Lower leg skin (tissue), 4 donors: ENCODE measurements at regions of chr5 and their contacts with region 1.

Region 1: GRCh38 chr5:77426670-77427069 is 65.4 kb downstream of the WDR41 start:
- DNase-seq: no peak
- H3K4me3 ChIP-seq: no peak overlapping the region
- CTCF ChIP-seq: no peak
- POLR2A ChIP-seq: no peak

Region 2: GRCh38 chr5:77376609-77377300 is 49.9 kb before region 1 on chr5:
- intact Hi-C with region 1: loop called (anchors 1 kb)
- DNase-seq: no peak
- H3K4me3 ChIP-seq: no peak overlapping the region
- CTCF ChIP-seq: no peak
- POLR2A ChIP-seq: no peak